ENCODE measurements at regions of chr18 and their contacts with region 1.

Region 1: GRCh38 chr18:9708057-9708433 is at the start of gene RAB31:
- ATAC-seq: peak; percentile 75 to 89 (median 86)
- H3K4me3 ChIP-seq: peak within 1 kb of the TSS; percentile 39 to 64 (median 60)
- H3K27ac ChIP-seq: peak within 1 kb of the TSS in 1 of 2 donors; percentile 10
- H3K4me1 ChIP-seq: peaks cover 3 to 14% of the 10 kb centered on the region in 2 donors
- total RNA-seq, gene RAB31: 2.8 to 55.2 (median 21.1) TPM

Region 2: GRCh38 chr18:9898792-9899549 is 190.9 kb after region 1 on chr18:
- in situ Hi-C with region 1: no loop called
- ATAC-seq: peak in 7 of 8 experiments; percentile 39 to 98 (median 97)
- H3K4me3 ChIP-seq: no peak overlapping the region
- H3K27ac ChIP-seq: no peak overlapping the region
- H3K4me1 ChIP-seq: peaks cover 0 to 3% of the 10 kb centered on the region in 2 donors

Region 3: DNA sequence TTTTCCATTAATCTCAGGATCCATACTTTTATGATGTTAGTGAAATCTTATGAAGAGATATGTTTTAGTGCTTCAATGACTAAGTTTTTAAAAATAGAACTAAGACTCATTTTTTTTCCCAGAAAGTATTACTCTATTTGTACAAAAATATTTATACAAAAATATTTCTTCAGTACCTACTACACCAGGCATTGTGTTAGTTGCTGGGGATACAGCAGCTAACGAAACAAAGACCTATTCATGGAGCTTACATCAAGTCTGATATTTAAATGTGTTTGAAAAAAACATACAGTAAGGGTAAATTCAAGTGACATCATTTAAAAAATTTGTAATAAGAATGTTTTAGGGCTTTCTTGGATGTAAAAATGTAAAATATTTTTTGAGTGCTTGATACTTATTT is 217.3 kb after region 1 on chr18:
- in situ Hi-C with region 1: loop called in 1 of 9 experiments (anchors 25 kb)
- ATAC-seq: peak in 2 of 8 experiments; percentile 39 to 55
- H3K4me3 ChIP-seq: no peak overlapping the region
- H3K27ac ChIP-seq: no peak overlapping the region
- H3K4me1 ChIP-seq: peaks cover 6 to 7% of the 10 kb centered on the region in 2 donors

Measured in motor neuron (in vitro differentiated cells).